ENCODE measurements at regions of chr5 and their contacts with region 1.

Region 1: GRCh38 chr5:73998489-73998888 is 372.5 kb downstream of the ARHGEF28 start:
- DNase-seq: no peak
- H3K4me3 ChIP-seq: no peak overlapping the region
- H3K27ac ChIP-seq: peak overlapping the region in 1 of 2 donors; percentile 48
- H3K4me1 ChIP-seq: no peaks in the 10 kb centered on the region
- H3K27me3 ChIP-seq: no peaks in the 10 kb centered on the region
- CTCF ChIP-seq: no peak
- POLR2A ChIP-seq: no peak

Region 2: DNA sequence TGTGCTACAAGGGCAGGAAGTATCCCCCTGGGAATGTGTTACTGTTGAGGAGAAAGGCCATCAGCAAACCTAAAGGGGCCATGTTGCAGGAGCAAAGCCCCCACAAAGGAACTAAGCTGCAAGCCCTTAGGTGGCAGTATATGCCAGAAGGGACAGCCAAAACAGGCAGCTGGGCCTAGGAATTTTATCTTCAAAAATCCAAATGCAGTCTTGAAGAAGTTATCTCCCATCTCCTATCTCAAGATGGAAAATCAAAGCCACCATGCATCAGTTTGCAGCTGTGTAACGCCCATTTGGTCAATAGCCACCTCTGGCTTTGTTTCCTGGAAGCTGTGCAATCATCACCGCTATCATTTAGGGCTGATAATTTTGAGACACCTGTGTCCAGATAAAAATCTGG is 27.8 kb after region 1 on chr5:
- intact Hi-C with region 1: no loop called
- DNase-seq: no peak
- H3K4me3 ChIP-seq: no peak overlapping the region
- H3K27ac ChIP-seq: no peak overlapping the region
- H3K4me1 ChIP-seq: no peaks in the 10 kb centered on the region
- H3K27me3 ChIP-seq: no peaks in the 10 kb centered on the region
- CTCF ChIP-seq: no peak
- POLR2A ChIP-seq: no peak

Region 3: GRCh38 chr5:74037321-74037720 is 38.8 kb after region 1 on chr5:
- intact Hi-C with region 1: loop called (anchors 2 kb)
- DNase-seq: no peak
- H3K4me3 ChIP-seq: no peak overlapping the region
- H3K27ac ChIP-seq: no peak overlapping the region
- H3K4me1 ChIP-seq: no peaks in the 10 kb centered on the region
- H3K27me3 ChIP-seq: no peaks in the 10 kb centered on the region
- CTCF ChIP-seq: no peak
- POLR2A ChIP-seq: no peak